ENCODE measurements at regions of chr14 and their contacts with region 1.

Region 1: DNA sequence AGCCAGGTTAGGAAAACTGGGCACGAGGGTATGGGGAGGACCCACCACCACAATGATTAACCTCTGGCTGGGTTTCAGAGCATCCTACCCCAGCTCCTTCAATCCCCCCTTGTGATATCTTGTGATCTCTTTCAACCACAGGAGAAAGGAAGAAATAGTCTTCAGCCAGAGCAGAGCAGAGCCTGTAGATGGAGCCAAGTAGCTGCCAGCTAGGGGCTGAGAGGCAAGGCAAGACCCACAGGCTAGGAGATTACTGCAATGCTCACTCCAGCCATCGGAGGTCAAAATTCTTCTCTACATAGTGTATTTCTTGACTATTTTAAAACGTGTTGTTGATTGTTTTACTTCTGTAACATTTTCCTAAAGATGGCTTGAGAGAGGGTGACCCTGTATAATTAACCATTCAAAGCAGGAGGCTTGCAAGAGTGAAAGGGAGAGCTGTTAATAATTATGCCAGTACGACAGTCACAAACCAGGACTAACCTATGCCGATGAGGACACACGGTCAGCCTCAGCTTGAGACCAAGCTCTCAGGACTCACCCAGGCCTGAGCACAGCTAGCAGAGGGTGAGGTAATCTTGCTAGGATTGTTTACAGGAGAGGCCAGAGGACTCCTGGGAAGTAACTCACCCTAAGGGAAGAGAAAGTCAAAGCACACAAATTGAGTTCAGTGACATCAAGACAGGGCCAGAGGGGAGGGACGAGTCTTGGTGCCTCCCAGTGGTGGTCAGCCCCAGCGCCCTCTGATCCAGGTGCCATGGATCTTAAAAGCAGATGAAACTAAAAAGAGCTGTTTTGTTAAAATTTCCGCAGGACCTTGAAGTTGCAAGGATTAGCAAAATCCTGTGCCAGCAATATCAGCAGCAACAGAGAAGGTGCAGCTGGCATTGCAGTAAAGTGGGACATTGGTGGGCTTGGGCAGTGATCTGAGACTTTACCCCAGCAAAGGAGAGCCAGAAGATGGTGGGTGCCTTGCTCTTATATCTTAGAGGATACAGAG is 29.8 kb upstream of the CDKN3 start:
- DNase-seq: peak in 3 of 4 experiments; percentile 12 to 59 (median 53)
- ATAC-seq: peak; percentile 97
- H3K4me3 ChIP-seq: no peak overlapping the region
- H3K27ac ChIP-seq: no peak overlapping the region
- H3K4me1 ChIP-seq: no peaks in the 10 kb centered on the region
- H3K27me3 ChIP-seq: peaks cover 3 to 21% of the 10 kb centered on the region in 2 experiments; a peak in 4 of 5 replicates
- CTCF ChIP-seq: peak; percentile 64 to 93 (median 87)
- EP300 ChIP-seq: no peak
- POLR2A ChIP-seq: no peak
- RAD21 ChIP-seq: peak; percentile 72 to 80

Region 2: GRCh38 chr14:54420013-54420809 is 53.2 kb after region 1 on chr14:
- CTCF ChIA-PET with region 1: no interaction called
- POLR2A ChIA-PET with region 1: no interaction called
- in situ Hi-C with region 1: no loop called
- intact Hi-C with region 1: loop called (anchors 2 kb)
- DNase-seq: peak; percentile 23 to 36 (median 26)
- ATAC-seq: peak; percentile 86
- H3K4me3 ChIP-seq: no peak overlapping the region
- H3K27ac ChIP-seq: no peak overlapping the region
- H3K4me1 ChIP-seq: no peaks in the 10 kb centered on the region; a peak in 1 of 5 replicates
- H3K27me3 ChIP-seq: no peaks in the 10 kb centered on the region
- CTCF ChIP-seq: peak; percentile 39 to 55 (median 53); a peak in 5 of 6 replicates
- EP300 ChIP-seq: no peak
- POLR2A ChIP-seq: no peak
- RAD21 ChIP-seq: peak; percentile 20 to 34; a peak in 2 of 4 replicates

Region 3: GRCh38 chr14:54488646-54489317 is 121.7 kb after region 1 on chr14 and contains the start of gene GMFB:
- CTCF ChIA-PET with region 1: no interaction called
- POLR2A ChIA-PET with region 1: no interaction called
- in situ Hi-C with region 1: no loop called
- intact Hi-C with region 1: loop called (anchors 10 kb)
- DNase-seq: peak; percentile 73 to 85 (median 78)
- ATAC-seq: peak; percentile 94
- H3K4me3 ChIP-seq: peak within 1 kb of the TSS; percentile 88
- H3K27ac ChIP-seq: peak within 1 kb of the TSS; percentile 82
- H3K4me1 ChIP-seq: peaks cover 9 to 20% of the 10 kb centered on the region in 2 experiments
- H3K27me3 ChIP-seq: no peaks in the 10 kb centered on the region
- CTCF ChIP-seq: peak; percentile 16 to 45 (median 37); a peak in 2 of 6 replicates
- EP300 ChIP-seq: peak; percentile 30
- POLR2A ChIP-seq: peak; percentile 71
- RAD21 ChIP-seq: no peak
- polyA plus RNA-seq, gene GMFB: 20.1 to 20.5 TPM

Region 4: GRCh38 chr14:54566410-54567223 is 199.6 kb after region 1 on chr14 and contains the start of gene SAMD4A:
- CTCF ChIA-PET with region 1: interaction called, 3 read pairs
- POLR2A ChIA-PET with region 1: no interaction called
- in situ Hi-C with region 1: no loop called
- intact Hi-C with region 1: loop called (anchors 2 kb)
- DNase-seq: peak; percentile 37 to 86 (median 58)
- ATAC-seq: peak; percentile 66
- H3K4me3 ChIP-seq: peak within 1 kb of the TSS; percentile 69
- H3K27ac ChIP-seq: peak within 1 kb of the TSS; percentile 81
- H3K4me1 ChIP-seq: peaks cover 12 to 39% of the 10 kb centered on the region in 2 experiments; a peak in 4 of 5 replicates
- H3K27me3 ChIP-seq: no peaks in the 10 kb centered on the region
- CTCF ChIP-seq: peak in 2 of 3 experiments; percentile 46 to 53; a peak in 4 of 6 replicates
- EP300 ChIP-seq: no peak
- POLR2A ChIP-seq: peak; percentile 54; the same call in 1 of the 2 replicates
- RAD21 ChIP-seq: peak; percentile 14 to 27; a peak in 3 of 4 replicates
- polyA plus RNA-seq, gene SAMD4A: 0.66 to 1.9 TPM

Region 5: GRCh38 chr14:54642801-54643697 is 276.0 kb after region 1 on chr14:
- CTCF ChIA-PET with region 1: no interaction called
- POLR2A ChIA-PET with region 1: no interaction called
- in situ Hi-C with region 1: no loop called
- intact Hi-C with region 1: loop called (anchors 10 kb)
- DNase-seq: peak in 1 of 4 experiments; percentile 27
- ATAC-seq: peak; percentile 72
- H3K4me3 ChIP-seq: no peak overlapping the region
- H3K27ac ChIP-seq: no peak overlapping the region
- H3K4me1 ChIP-seq: no peaks in the 10 kb centered on the region
- H3K27me3 ChIP-seq: no peaks in the 10 kb centered on the region
- CTCF ChIP-seq: peak in 2 of 3 experiments; percentile 34 to 46; a peak in 2 of 6 replicates
- EP300 ChIP-seq: no peak
- POLR2A ChIP-seq: no peak
- RAD21 ChIP-seq: peak; percentile 28 to 49; a peak in 3 of 4 replicates

Region 6: GRCh38 chr14:54691525-54692283 is 324.7 kb after region 1 on chr14:
- CTCF ChIA-PET with region 1: no interaction called
- POLR2A ChIA-PET with region 1: no interaction called
- in situ Hi-C with region 1: no loop called
- intact Hi-C with region 1: loop called (anchors 10 kb)
- DNase-seq: peak; percentile 43 to 74 (median 59)
- ATAC-seq: peak; percentile 94
- H3K4me3 ChIP-seq: no peak overlapping the region
- H3K27ac ChIP-seq: no peak overlapping the region; the same call in 2 of the 3 replicates
- H3K4me1 ChIP-seq: peaks cover 0 to 6% of the 10 kb centered on the region in 2 experiments; a peak in 2 of 5 replicates
- H3K27me3 ChIP-seq: no peaks in the 10 kb centered on the region
- CTCF ChIP-seq: peak; percentile 79 to 83 (median 83)
- EP300 ChIP-seq: no peak
- POLR2A ChIP-seq: no peak
- RAD21 ChIP-seq: peak; percentile 57 to 69